Transverse colon (tissue), 4 donors: ENCODE measurements at regions of chr1 and their contacts with region 1.

Region 1: GRCh38 chr1:84620720-84621313 is 46.6 kb upstream of the CTBS start:
- DNase-seq: peak; percentile 81
- H3K4me3 ChIP-seq: peak overlapping the region; percentile 46 to 78 (median 52)
- H3K27ac ChIP-seq: peak overlapping the region; percentile 69 to 81 (median 74)
- H3K4me1 ChIP-seq: peaks cover 0 to 18% (median 7%) of the 10 kb centered on the region in 4 donors
- H3K27me3 ChIP-seq: no peaks in the 10 kb centered on the region
- CTCF ChIP-seq: peak; percentile 90 to 99 (median 98)
- EP300 ChIP-seq: no peak
- POLR2A ChIP-seq: no peak

Region 2: DNA sequence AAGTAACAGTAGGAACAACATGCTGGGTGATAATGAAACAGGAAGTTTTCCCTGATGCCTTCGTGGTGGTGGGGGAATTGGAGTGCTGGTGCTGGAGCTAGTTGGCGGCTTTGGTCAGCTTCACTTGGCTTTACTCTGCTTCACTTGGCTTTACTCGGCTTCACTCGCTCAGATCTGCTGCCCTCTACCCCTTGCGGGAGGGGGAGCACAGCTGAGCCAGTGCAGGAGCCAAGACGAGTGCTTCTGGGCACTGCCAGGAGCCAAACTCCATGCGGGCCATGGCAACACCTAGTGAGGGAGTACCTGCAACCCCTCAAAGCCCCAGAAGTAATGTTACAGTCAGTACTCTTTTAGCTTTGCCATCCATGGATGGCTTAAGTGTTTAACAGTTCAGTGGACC is 487.3 kb before region 1 on chr1:
- in situ Hi-C with region 1: loop called in 3 of 4 experiments (anchors 10 to 25 kb)
- intact Hi-C with region 1: no loop called
- DNase-seq: no peak
- H3K4me3 ChIP-seq: no peak overlapping the region
- H3K27ac ChIP-seq: no peak overlapping the region
- H3K4me1 ChIP-seq: no peaks in the 10 kb centered on the region
- H3K27me3 ChIP-seq: no peaks in the 10 kb centered on the region
- CTCF ChIP-seq: no peak
- EP300 ChIP-seq: no peak
- POLR2A ChIP-seq: no peak

Region 3: GRCh38 chr1:84143796-84144565 is 476.8 kb before region 1 on chr1 and contains the start of gene PRKACB:
- in situ Hi-C with region 1: loop called in 3 of 4 experiments (anchors 10 to 25 kb)
- intact Hi-C with region 1: no loop called
- DNase-seq: no peak
- H3K4me3 ChIP-seq: peak within 1 kb of the TSS in 3 of 4 donors; percentile 20 to 45 (median 30)
- H3K27ac ChIP-seq: peak within 1 kb of the TSS; percentile 71 to 85 (median 80)
- H3K4me1 ChIP-seq: peaks cover 0 to 41% (median 4%) of the 10 kb centered on the region in 4 donors
- H3K27me3 ChIP-seq: no peaks in the 10 kb centered on the region
- CTCF ChIP-seq: no peak
- EP300 ChIP-seq: no peak
- POLR2A ChIP-seq: peak; percentile 76
- total RNA-seq, gene PRKACB: 34.6 to 115 (median 79.2) TPM

Region 4: GRCh38 chr1:84442256-84442655 is 178.6 kb before region 1 on chr1:
- in situ Hi-C with region 1: loop called in 2 of 4 experiments (anchors 10 to 25 kb)
- intact Hi-C with region 1: no loop called
- DNase-seq: no peak
- H3K4me3 ChIP-seq: no peak overlapping the region
- H3K27ac ChIP-seq: no peak overlapping the region
- H3K4me1 ChIP-seq: peaks cover 0 to 12% (median 3%) of the 10 kb centered on the region in 4 donors
- H3K27me3 ChIP-seq: no peaks in the 10 kb centered on the region
- CTCF ChIP-seq: peak; percentile 26 to 59 (median 45)
- EP300 ChIP-seq: no peak
- POLR2A ChIP-seq: no peak

Region 5: GRCh38 chr1:85188530-85188929 is 567.7 kb after region 1 on chr1:
- in situ Hi-C with region 1: no loop called
- intact Hi-C with region 1: no loop called
- DNase-seq: no peak
- H3K4me3 ChIP-seq: no peak overlapping the region
- H3K27ac ChIP-seq: peak overlapping the region in 3 of 4 donors; percentile 9 to 27 (median 16)
- H3K4me1 ChIP-seq: no peaks in the 10 kb centered on the region
- H3K27me3 ChIP-seq: no peaks in the 10 kb centered on the region
- CTCF ChIP-seq: no peak
- EP300 ChIP-seq: no peak
- POLR2A ChIP-seq: no peak